ENCODE measurements at regions of chr3 and their contacts with region 1.

Region 1: GRCh38 chr3:62201438-62202035 is 171.8 kb downstream of the FEZF2 start:
- DNase-seq: peak in 1 of 2 experiments; percentile 5
- H3K4me3 ChIP-seq: no peak overlapping the region
- H3K27ac ChIP-seq: no peak overlapping the region
- H3K4me1 ChIP-seq: no peaks in the 10 kb centered on the region
- H3K27me3 ChIP-seq: no peaks in the 10 kb centered on the region
- CTCF ChIP-seq: peak; percentile 63

Region 2: DNA sequence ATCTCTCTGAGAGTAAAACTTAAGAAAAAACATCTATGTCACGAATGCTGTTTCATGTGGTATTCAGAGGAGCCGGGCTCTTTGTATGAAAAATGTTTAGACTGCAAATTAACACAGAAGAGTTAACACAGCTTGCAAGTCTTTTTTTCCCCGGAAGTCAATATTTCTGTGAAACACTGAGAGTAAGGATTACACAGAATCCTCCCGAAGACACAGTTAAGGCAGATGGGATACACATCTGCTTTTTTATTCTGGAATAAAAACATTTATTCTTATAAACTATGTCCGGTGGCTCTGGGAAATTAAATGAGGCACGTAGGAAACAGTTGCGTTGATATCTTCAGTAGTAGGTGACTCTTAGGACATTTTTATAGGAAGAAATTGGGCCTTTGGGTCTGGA is 459.5 kb before region 1 on chr3:
- CTCF ChIA-PET with region 1: no interaction called
- POLR2A ChIA-PET with region 1: no interaction called
- intact Hi-C with region 1: no loop called
- DNase-seq: no peak
- H3K4me3 ChIP-seq: no peak overlapping the region
- H3K27ac ChIP-seq: no peak overlapping the region
- H3K4me1 ChIP-seq: no peaks in the 10 kb centered on the region
- H3K27me3 ChIP-seq: no peaks in the 10 kb centered on the region
- CTCF ChIP-seq: no peak

Region 3: GRCh38 chr3:62293051-62293780 is 91.7 kb after region 1 on chr3:
- CTCF ChIA-PET with region 1: no interaction called
- POLR2A ChIA-PET with region 1: no interaction called
- intact Hi-C with region 1: no loop called
- DNase-seq: no peak
- H3K4me3 ChIP-seq: no peak overlapping the region
- H3K27ac ChIP-seq: no peak overlapping the region
- H3K4me1 ChIP-seq: no peaks in the 10 kb centered on the region
- H3K27me3 ChIP-seq: no peaks in the 10 kb centered on the region
- CTCF ChIP-seq: no peak

Region 4: GRCh38 chr3:62318750-62319569 is 117.4 kb after region 1 on chr3:
- CTCF ChIA-PET with region 1: no interaction called
- POLR2A ChIA-PET with region 1: no interaction called
- intact Hi-C with region 1: no loop called
- DNase-seq: peak; percentile 61 to 72
- H3K4me3 ChIP-seq: peak overlapping the region; percentile 90
- H3K27ac ChIP-seq: no peak overlapping the region
- H3K4me1 ChIP-seq: 0 out of 2 replicates have a peak, but pooled peaks cover 5% of the 10 kb centered on the region
- H3K27me3 ChIP-seq: no peaks in the 10 kb centered on the region
- CTCF ChIP-seq: no peak

Region 5: DNA sequence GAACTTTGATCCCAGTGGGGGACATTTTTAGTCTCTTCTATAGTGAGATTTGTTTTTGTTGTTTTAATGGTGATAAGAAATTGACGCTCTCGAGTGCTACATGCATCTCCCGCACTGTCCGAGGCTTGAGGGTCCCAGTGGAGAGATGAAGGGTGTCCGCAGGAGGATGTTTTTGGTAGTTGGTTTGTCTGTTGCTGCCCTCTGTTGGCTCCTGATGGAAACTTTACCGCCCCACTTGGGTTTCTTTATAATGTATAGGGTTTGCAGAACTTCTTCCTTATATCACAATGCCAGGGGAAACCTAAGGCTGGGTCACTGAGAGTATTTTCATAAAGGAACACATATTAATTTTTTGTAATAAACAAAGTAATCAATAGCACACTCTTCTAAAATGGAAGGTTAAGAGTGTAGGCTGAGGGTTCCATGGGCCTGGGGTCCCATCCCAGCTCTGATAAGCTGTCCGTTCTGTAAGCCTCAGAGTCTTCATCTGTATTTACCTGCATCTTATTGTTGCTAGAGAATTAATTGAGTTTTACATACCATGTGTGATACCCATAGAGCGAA is 357.1 kb after region 1 on chr3:
- CTCF ChIA-PET with region 1: no interaction called
- POLR2A ChIA-PET with region 1: no interaction called
- intact Hi-C with region 1: loop called (anchors 5 kb)
- DNase-seq: no peak
- H3K4me3 ChIP-seq: no peak overlapping the region
- H3K27ac ChIP-seq: no peak overlapping the region
- H3K4me1 ChIP-seq: no peaks in the 10 kb centered on the region
- H3K27me3 ChIP-seq: no peaks in the 10 kb centered on the region
- CTCF ChIP-seq: peak; percentile 66

Region 6: DNA sequence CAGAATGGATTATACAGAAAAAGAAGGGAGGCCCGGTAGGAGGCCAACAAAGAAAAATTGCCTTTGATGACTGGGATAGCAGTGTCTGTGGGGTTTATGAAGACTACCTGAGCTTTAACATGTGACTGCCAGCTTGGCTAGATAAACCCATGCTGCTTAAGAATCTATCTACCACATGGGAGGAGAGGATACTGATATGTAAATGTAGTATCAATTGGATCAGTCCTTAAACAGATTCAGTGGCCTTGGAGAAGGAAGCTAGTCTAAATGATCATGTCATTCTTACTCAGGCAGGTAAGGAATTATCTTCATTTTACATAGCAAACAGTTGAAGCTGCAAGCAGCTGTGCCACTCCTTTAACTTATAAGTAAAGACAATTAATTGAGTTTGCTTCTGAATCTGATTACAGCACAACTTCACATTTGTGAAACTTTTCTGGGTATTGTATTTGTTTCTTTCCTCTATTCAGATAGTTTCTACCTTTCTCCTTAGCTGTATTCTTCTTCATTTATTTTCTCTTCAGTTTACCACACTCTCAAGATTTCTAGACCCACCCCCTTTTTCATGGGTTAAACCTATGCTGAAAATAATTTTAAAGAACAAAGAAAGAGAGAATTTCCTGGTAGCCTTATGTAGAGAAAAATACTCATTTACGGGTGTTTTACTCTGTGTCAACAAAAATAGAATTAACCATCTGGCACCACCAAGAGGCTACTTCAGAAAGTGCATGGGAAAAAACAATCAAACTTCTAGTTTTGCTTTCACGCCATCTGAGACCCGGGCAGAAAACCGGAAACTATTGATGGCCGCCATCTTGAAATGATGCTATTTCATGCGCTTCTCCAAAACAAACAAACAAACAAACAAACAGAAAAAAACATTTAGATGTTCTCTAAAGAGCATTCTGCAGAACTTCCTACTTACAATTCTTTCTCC is 1026.8 kb after region 1 on chr3:
- CTCF ChIA-PET with region 1: no interaction called
- POLR2A ChIA-PET with region 1: no interaction called
- intact Hi-C with region 1: loop called (anchors 5 kb)
- DNase-seq: no peak
- H3K4me3 ChIP-seq: no peak overlapping the region
- H3K27ac ChIP-seq: no peak overlapping the region
- H3K4me1 ChIP-seq: no peaks in the 10 kb centered on the region
- H3K27me3 ChIP-seq: no peaks in the 10 kb centered on the region
- CTCF ChIP-seq: 0 out of 2 replicates have a peak, but pooled peaks have one; percentile 41